ENCODE measurements at regions of chr17 and their contacts with region 1.

Region 1: GRCh38 chr17:60525685-60526514 is at the start of gene APPBP2:
- DNase-seq: peak; percentile 71 to 85 (median 75)
- H3K4me3 ChIP-seq: peak within 1 kb of the TSS; percentile 93 to 96
- H3K4me3 Mint-ChIP-seq: peak within 1 kb of the TSS; percentile 97 to 100 (median 99)
- H3K27ac ChIP-seq: peak within 1 kb of the TSS; percentile 98
- H3K27ac Mint-ChIP-seq: peak within 1 kb of the TSS; percentile 96 to 99 (median 99)
- H3K4me1 ChIP-seq: peaks cover 34% of the 10 kb centered on the region
- H3K4me1 Mint-ChIP-seq: peaks cover 32 to 62% (median 48%) of the 10 kb centered on the region in 4 donors
- H3K27me3 ChIP-seq: no peaks in the 10 kb centered on the region
- H3K27me3 Mint-ChIP-seq: peaks cover 0 to 2% of the 10 kb centered on the region in 2 donors
- total RNA-seq, gene APPBP2: 48.4 to 50.8 TPM

Region 2: DNA sequence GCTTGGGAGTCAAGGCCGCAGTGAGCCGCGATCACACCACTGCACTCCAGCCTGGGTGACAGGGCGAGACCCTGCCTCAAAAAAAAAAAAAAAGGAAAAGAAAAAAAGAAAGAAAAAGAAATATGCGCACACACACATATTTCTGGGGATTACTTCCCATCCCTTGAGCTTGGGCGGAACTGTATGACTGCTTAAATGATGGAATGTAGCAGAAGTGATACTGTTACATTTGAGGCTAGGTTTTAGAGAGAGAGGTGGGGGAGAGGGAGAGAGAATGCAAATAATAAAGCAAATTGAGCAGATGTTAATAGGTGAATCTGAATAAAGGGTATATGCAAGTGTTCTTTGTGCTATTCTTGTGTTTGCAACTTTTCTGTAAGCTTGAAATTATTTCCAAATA is 121.9 kb before region 1 on chr17:
- CTCF ChIA-PET with region 1: no interaction called
- POLR2A ChIA-PET with region 1: no interaction called
- intact Hi-C with region 1: no loop called
- DNase-seq: no peak
- H3K4me3 ChIP-seq: no peak overlapping the region
- H3K4me3 Mint-ChIP-seq: no peak overlapping the region
- H3K27ac ChIP-seq: no peak overlapping the region
- H3K27ac Mint-ChIP-seq: no peak overlapping the region
- H3K4me1 ChIP-seq: no peaks in the 10 kb centered on the region
- H3K4me1 Mint-ChIP-seq: no peaks in the 10 kb centered on the region
- H3K27me3 ChIP-seq: no peaks in the 10 kb centered on the region
- H3K27me3 Mint-ChIP-seq: peaks cover 6 to 9% of the 10 kb centered on the region in 2 donors

Region 3: DNA sequence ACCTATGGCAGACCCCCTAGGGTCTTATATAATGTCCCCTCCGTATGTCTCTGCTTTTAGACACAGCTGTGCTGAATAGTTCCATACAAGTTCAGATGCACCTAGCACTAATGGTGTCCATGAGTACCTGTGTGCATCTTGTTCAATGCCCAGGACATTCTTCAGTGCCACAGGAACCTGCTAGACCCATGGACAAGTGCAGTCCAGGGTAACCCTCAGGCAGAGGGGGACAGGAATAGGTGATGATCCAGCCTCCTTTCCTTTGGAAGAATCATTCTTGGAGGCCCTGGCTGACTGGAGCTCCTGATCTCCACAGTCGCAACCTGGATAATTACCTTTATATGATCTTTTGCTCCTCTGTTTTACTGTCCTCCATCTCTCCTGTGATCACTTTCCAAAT is 45.7 kb after region 1 on chr17:
- CTCF ChIA-PET with region 1: interaction called, 6 read pairs
- POLR2A ChIA-PET with region 1: no interaction called
- intact Hi-C with region 1: loop called (anchors 2 kb)
- DNase-seq: no peak
- H3K4me3 ChIP-seq: no peak overlapping the region
- H3K4me3 Mint-ChIP-seq: no peak overlapping the region
- H3K27ac ChIP-seq: no peak overlapping the region
- H3K27ac Mint-ChIP-seq: no peak overlapping the region
- H3K4me1 ChIP-seq: no peaks in the 10 kb centered on the region
- H3K4me1 Mint-ChIP-seq: peaks cover 0 to 1% (median 0%) of the 10 kb centered on the region in 4 donors
- H3K27me3 ChIP-seq: no peaks in the 10 kb centered on the region
- H3K27me3 Mint-ChIP-seq: peaks cover 2% of the 10 kb centered on the region in 2 donors

Region 4: DNA sequence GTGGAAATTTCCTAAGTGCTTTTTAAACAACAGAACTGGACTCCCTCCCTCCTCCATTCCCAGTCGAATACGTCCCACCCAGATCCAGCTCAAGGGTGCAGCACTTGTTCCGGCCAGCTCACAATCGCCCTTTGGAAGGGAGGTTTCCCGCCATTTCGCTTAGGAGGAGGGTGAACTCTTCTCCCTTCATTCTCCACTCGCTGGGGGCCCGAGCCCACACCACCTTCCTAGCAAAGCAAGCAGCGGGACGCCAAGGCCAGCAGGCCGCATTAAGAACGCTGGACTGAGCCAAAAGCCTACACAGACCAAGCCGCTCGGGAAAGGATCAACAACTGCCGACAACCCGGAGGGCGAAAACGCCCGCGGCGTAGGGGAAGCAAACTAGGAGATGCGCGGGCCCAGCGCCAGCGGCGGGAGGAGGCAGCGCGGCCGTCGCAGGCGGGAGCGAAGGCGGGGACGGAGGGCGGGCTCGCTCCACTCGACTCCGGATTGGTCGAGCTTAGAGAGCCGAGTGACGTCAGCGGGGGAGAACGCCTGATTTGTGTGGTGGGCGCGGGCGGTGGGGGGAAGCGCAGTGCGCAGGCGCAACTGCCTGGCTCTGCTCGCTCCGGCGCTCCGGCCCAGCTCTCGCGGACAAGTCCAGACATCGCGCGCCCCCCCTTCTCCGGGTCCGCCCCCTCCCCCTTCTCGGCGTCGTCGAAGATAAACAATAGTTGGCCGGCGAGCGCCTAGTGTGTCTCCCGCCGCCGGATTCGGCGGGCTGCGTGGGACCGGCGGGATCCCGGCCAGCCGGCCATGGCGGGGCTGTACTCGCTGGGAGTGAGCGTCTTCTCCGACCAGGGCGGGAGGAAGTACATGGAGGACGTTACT is 74.0 kb after region 1 on chr17 and contains the start of gene PPM1D:
- CTCF ChIA-PET with region 1: no interaction called
- POLR2A ChIA-PET with region 1: interaction called, 3 read pairs
- intact Hi-C with region 1: loop called (anchors 1 kb)
- DNase-seq: peak; percentile 96 to 97 (median 96)
- H3K4me3 ChIP-seq: peak within 1 kb of the TSS; percentile 97 to 98
- H3K4me3 Mint-ChIP-seq: peak within 1 kb of the TSS; percentile 95 to 99 (median 98)
- H3K27ac ChIP-seq: peak within 1 kb of the TSS; percentile 94
- H3K27ac Mint-ChIP-seq: peak within 1 kb of the TSS; percentile 97 to 98 (median 98)
- H3K4me1 ChIP-seq: peaks cover 37% of the 10 kb centered on the region
- H3K4me1 Mint-ChIP-seq: peaks cover 25 to 57% (median 38%) of the 10 kb centered on the region in 4 donors
- H3K27me3 ChIP-seq: no peaks in the 10 kb centered on the region
- H3K27me3 Mint-ChIP-seq: no peaks in the 10 kb centered on the region
- total RNA-seq, gene PPM1D: 18.9 to 19.4 TPM

Region 5: DNA sequence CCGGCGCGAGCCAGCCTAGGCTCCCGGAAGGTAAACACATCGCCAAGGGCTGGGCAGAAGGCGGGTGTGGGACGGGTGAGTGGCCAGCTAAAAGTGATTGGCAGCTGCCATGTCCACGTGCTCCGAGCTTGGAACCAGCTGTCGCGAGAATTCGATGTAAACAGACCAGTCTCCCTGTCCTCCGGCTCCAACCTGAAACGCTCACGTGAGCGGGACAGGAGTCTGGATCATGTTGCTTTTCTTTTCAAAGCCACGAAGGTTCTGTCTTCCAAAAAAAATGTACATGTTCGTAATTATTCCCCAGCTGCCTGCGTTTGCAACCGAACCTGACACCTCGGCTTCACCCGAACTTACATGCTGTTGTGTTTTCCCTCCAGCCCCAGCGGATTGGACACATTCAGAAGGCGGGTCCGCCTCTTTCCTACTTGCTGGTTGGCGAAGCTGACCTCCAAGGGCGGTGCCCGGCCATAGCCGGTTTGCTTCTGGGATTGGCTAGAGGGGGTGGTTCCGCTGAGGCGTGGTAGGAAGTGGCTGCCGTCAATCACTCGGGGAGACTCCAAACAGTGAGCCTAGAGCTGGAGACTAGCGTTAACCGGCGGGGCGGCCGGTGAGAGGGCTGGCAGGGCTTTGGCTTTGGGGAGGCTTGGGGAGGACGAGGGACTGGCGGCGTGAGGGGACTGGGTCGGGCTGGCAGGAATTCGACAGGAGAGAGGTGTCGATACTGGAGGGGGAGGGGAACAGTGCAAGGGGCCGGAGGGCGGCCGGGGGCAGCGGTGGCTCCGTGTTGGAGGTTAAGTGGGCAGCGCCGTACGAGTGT is 151.6 kb after region 1 on chr17 and contains the start of gene BCAS3:
- CTCF ChIA-PET with region 1: no interaction called
- POLR2A ChIA-PET with region 1: interaction called, 5 read pairs
- intact Hi-C with region 1: loop called (anchors 1 kb)
- DNase-seq: peak; percentile 96 to 99 (median 97)
- H3K4me3 ChIP-seq: peak within 1 kb of the TSS; percentile 65 to 96
- H3K4me3 Mint-ChIP-seq: peak within 1 kb of the TSS; percentile 91 to 99 (median 97)
- H3K27ac ChIP-seq: peak within 1 kb of the TSS; percentile 72
- H3K27ac Mint-ChIP-seq: peak within 1 kb of the TSS; percentile 93 to 99 (median 98)
- H3K4me1 ChIP-seq: peaks cover 14% of the 10 kb centered on the region
- H3K4me1 Mint-ChIP-seq: peaks cover 17 to 26% (median 23%) of the 10 kb centered on the region in 4 donors
- H3K27me3 ChIP-seq: no peaks in the 10 kb centered on the region
- H3K27me3 Mint-ChIP-seq: no peaks in the 10 kb centered on the region
- total RNA-seq, gene BCAS3: 40.3 to 42.2 TPM

Measured in CD4-positive, alpha-beta memory T cell (primary cell).